Dendritic cell treated with granulocyte-macrophage colony-stimulating factor and Interleukin-4, amounts not matched to agents 40 ng/mL and 50 ng/mL, for 4 days (primary cell): ENCODE measurements at regions of chr11 and their contacts with region 1.

Region 1: GRCh38 chr11:35006389-35007128 is 90.1 kb downstream of the PDHX start:
- H3K4me3 Mint-ChIP-seq: no peak overlapping the region
- H3K27ac Mint-ChIP-seq: peak overlapping the region; percentile 73
- H3K4me1 Mint-ChIP-seq: peaks cover 44% of the 10 kb centered on the region
- H3K27me3 Mint-ChIP-seq: no peaks in the 10 kb centered on the region

Region 2: DNA sequence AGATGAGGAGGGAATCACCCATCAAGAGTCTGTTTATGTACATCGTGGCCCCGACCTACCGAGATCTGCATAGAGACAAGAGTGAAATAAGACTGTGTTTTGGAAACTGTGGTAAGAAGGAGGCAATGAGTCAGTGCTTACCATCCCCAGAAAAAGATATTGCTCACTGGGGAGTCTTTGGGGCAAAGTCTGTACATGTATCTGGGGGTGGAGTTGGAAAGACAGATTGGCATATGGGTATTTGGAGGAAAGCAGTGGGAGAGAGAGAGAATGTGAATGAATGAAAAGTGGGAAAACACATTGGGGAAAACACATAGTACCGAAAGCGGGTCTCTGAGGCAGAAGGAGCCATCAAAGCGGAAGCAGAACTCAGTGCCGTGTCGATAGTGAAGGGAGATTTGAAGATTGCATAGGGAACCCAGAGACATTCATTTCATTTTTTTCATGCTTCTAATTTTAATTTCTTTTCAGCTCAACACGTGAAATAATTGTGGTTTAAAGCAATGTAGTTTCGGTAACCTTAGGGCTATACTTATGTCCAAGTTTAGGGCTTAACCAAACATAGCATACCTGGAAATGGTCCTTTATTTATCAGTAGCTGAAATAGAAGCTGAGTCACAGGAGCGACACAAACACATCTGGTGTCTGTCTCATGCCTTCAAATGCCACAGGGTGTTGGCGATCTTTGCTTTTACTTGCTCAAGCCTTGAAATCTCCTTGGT is 33.8 kb after region 1 on chr11:
- intact Hi-C with region 1: loop called (anchors 5 kb)
- H3K4me3 Mint-ChIP-seq: peak overlapping the region; percentile 25
- H3K27ac Mint-ChIP-seq: peak overlapping the region; percentile 58
- H3K4me1 Mint-ChIP-seq: peaks cover 61% of the 10 kb centered on the region
- H3K27me3 Mint-ChIP-seq: no peaks in the 10 kb centered on the region